ENCODE measurements at regions of chr15 and their contacts with region 1.

Region 1: GRCh38 chr15:36883713-36884517 is 216.4 kb downstream of the MEIS2 start:
- DNase-seq: peak; percentile 86 to 94 (median 89)
- H3K4me3 ChIP-seq: peak overlapping the region; percentile 36
- H3K27ac ChIP-seq: no peak overlapping the region
- H3K4me1 ChIP-seq: peaks cover 3% of the 10 kb centered on the region
- H3K27me3 ChIP-seq: no peaks in the 10 kb centered on the region
- CTCF ChIP-seq: peak; percentile 67 to 77 (median 76)
- EP300 ChIP-seq: no peak
- POLR2A ChIP-seq: no peak

Region 2: DNA sequence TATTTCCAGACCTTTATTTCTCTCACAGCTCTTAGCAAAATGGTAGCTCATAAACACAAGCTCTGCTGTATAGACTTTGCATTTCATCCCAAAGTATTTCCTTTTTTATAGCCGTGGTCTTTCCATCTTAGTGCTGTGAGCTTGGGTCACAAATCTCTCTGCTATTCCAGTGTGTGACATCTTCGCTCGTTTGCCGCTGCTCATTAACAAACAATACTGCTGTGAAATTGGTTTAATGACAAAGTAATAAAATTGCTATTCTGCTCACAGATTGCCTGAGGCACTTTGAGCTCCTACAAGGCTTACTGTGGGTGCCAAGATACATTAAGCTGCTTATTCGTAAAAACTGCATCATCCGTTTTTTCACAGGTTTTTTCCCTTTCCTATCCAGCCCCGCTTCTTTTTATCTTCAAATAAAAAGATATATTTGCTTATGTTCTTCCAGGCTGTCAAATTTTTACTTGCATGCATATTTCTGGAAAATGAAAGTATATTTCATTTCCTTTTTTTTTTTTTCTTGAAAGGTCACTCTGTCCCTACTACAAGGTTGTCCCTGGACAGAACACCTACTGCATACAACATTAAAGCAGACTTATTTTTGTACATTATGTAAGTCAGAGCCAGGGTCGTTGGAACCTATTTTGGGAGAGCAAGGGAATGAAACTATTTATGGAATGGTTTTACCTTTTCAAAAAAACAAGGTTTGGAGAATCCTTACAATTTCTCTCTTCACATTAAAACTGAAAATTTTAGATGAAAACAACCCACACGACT is 41.9 kb after region 1 on chr15:
- intact Hi-C with region 1: no loop called
- DNase-seq: no peak
- H3K4me3 ChIP-seq: no peak overlapping the region
- H3K27ac ChIP-seq: no peak overlapping the region
- H3K4me1 ChIP-seq: peaks cover 4% of the 10 kb centered on the region
- H3K27me3 ChIP-seq: no peaks in the 10 kb centered on the region
- CTCF ChIP-seq: no peak
- EP300 ChIP-seq: no peak
- POLR2A ChIP-seq: no peak

Region 3: GRCh38 chr15:37106490-37107001 is 222.6 kb after region 1 on chr15:
- intact Hi-C with region 1: loop called (anchors 2 to 10 kb)
- DNase-seq: peak; percentile 44 to 76 (median 71)
- H3K4me3 ChIP-seq: peak overlapping the region; percentile 31
- H3K27ac ChIP-seq: no peak overlapping the region
- H3K4me1 ChIP-seq: no peaks in the 10 kb centered on the region
- H3K27me3 ChIP-seq: no peaks in the 10 kb centered on the region
- CTCF ChIP-seq: no peak
- EP300 ChIP-seq: no peak
- POLR2A ChIP-seq: no peak

Region 4: GRCh38 chr15:37134699-37135131 is 250.8 kb after region 1 on chr15:
- intact Hi-C with region 1: loop called in 3 of 4 experiments (anchors 5 to 10 kb)
- DNase-seq: no peak
- H3K4me3 ChIP-seq: no peak overlapping the region
- H3K27ac ChIP-seq: no peak overlapping the region
- H3K4me1 ChIP-seq: no peaks in the 10 kb centered on the region
- H3K27me3 ChIP-seq: no peaks in the 10 kb centered on the region
- CTCF ChIP-seq: peak in 2 of 3 donors; percentile 52 to 57
- EP300 ChIP-seq: no peak
- POLR2A ChIP-seq: no peak

Measured in ovary (tissue), 10 donors.